Activated CD4-positive, alpha-beta memory T cell treated with anti-CD3 and anti-CD28 coated beads for 36 hours (primary cell): ENCODE measurements at regions of chrX and their contacts with region 1.

Region 1: GRCh38 chrX:103310542-103311398 is at the start of gene BEX2:
- DNase-seq: peak; percentile 90
- H3K4me3 Mint-ChIP-seq: peak within 1 kb of the TSS; percentile 69
- H3K27ac Mint-ChIP-seq: no peak within 1 kb of the TSS
- H3K4me1 Mint-ChIP-seq: peaks cover 4% of the 10 kb centered on the region
- H3K27me3 Mint-ChIP-seq: no peaks in the 10 kb centered on the region
- total RNA-seq, gene BEX2: 11.3 to 12.1 TPM

Region 2: GRCh38 chrX:103254921-103255493 is 55.8 kb before region 1 on chrX and contains the start of gene TCEAL8:
- CTCF ChIA-PET with region 1: no interaction called
- POLR2A ChIA-PET with region 1: no interaction called
- intact Hi-C with region 1: loop called (anchors 2 kb)
- DNase-seq: peak; percentile 79
- H3K4me3 Mint-ChIP-seq: peak within 1 kb of the TSS; percentile 95
- H3K27ac Mint-ChIP-seq: peak within 1 kb of the TSS; percentile 96
- H3K4me1 Mint-ChIP-seq: peaks cover 20% of the 10 kb centered on the region
- H3K27me3 Mint-ChIP-seq: no peaks in the 10 kb centered on the region
- total RNA-seq, gene TCEAL8: 37.8 to 38.5 TPM